Tibial artery (tissue), 4 donors: ENCODE measurements at regions of chr16 and their contacts with region 1.

Region 1: GRCh38 chr16:9415548-9415947 is 324.1 kb downstream of the HAPSTR1 start:
- DNase-seq: no peak
- H3K4me3 ChIP-seq: no peak overlapping the region
- H3K27ac ChIP-seq: no peak overlapping the region
- H3K4me1 ChIP-seq: no peaks in the 10 kb centered on the region
- H3K27me3 ChIP-seq: peaks cover 0 to 10% of the 10 kb centered on the region in 2 donors
- CTCF ChIP-seq: no peak

Region 2: GRCh38 chr16:9297437-9298113 is 118.0 kb before region 1 on chr16:
- intact Hi-C with region 1: no loop called
- DNase-seq: peak; percentile 23 to 72
- H3K4me3 ChIP-seq: no peak overlapping the region
- H3K27ac ChIP-seq: no peak overlapping the region
- H3K4me1 ChIP-seq: peaks cover 0 to 18% (median 0%) of the 10 kb centered on the region in 4 donors
- H3K27me3 ChIP-seq: no peaks in the 10 kb centered on the region
- CTCF ChIP-seq: peak; percentile 73 to 76

Region 3: DNA sequence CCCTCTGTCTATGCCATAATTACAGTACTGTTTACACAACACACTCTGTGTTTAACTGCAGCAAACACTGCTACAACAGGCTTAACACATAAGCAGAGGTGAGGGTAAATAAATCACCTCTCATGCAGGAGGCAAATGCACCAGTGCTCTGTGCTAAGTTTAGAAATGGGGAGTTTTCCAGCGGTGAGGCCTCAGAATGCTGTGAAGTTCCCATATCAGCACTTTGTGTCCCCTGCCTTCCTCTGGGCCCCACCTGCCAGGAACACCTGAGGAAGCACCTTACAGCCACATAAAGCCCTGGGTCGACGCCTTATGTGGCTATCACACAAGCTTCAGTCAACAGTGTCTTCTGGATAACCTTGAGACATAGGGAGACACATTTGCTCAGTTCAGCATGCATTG is 19.6 kb before region 1 on chr16:
- intact Hi-C with region 1: loop called (anchors 1 kb)
- DNase-seq: no peak
- H3K4me3 ChIP-seq: no peak overlapping the region
- H3K27ac ChIP-seq: no peak overlapping the region
- H3K4me1 ChIP-seq: no peaks in the 10 kb centered on the region
- H3K27me3 ChIP-seq: peaks cover 0 to 4% of the 10 kb centered on the region in 2 donors
- CTCF ChIP-seq: no peak